ENCODE measurements at regions of chr20 and their contacts with region 1.

Region 1: DNA sequence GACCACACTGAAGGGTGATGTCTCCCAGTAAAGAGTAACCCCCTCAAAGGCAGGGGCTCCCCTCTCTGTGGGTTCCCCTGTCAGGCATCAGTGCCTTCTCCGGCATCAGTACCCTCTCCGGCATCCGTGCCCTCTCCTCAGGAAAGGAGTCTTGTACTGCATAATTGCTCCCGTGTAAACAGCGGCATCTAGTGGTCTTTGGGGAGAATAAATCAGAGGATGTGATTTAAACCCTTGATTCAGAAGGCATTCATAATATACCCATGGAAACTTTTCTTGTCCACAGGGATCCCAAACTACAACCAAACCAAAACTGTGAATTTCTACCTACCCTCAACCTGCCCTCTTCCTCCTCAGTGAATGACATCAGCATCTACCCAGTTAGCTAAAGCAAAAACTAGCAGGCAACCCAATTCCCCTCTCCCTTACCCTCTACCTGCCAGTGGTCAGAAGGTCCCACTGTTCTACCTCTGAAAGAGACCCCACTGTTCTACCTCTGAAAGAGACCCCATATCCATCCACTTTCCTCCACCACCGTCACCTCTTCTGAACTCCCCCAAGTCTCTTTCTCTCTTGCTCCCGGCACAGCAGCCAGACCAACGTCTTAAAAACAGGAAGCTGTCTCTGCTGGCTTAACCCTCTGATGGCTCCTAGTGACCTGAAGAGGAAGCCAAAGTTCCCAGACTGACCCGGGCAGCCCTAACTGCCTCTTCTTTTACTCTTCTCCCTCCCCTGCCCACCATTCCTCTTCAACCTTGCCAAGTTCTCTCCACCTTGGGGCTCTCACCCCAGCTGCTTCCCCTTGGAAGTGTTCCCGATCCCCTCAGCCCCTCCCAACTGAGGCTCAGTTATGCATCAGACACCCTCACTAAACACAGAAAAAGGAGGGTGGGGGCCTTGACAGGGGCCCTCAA is 27.2 kb downstream of the UBE2V1 start:
- DNase-seq: peak; percentile 43 to 66
- H3K4me3 ChIP-seq: peak overlapping the region; percentile 24; the same call in 1 of the 2 replicates
- H3K27ac ChIP-seq: peak overlapping the region; percentile 81
- H3K4me1 ChIP-seq: peaks cover 41% of the 10 kb centered on the region
- H3K27me3 ChIP-seq: no peaks in the 10 kb centered on the region
- CTCF ChIP-seq: peak; percentile 92

Region 2: DNA sequence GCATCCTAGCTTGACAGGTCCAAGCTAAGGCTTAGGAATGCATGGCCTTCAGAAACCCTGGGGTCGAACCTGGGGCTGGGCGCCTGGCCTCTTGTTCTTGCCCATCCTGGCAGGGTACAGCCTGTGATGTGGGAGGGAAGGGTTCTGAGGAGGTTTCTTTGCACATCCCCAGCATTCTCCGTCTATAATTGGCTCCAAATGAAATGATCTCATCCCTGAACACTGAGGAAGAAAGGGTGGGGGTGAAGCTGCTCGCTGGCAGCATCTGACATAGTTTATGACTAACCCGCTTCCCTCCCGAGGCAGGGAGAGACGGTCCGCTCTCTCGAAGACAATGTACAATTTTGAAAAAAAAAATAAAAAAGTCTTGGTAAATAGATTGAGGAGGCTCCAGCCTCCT is 740.7 kb before region 1 on chr20:
- CTCF ChIA-PET with region 1: no interaction called
- POLR2A ChIA-PET with region 1: no interaction called
- intact Hi-C with region 1: loop called (anchors 5 kb)
- DNase-seq: peak; percentile 77 to 94
- H3K4me3 ChIP-seq: peak overlapping the region; percentile 45; the same call in 1 of the 2 replicates
- H3K27ac ChIP-seq: peak overlapping the region; percentile 81
- H3K4me1 ChIP-seq: peaks cover 39% of the 10 kb centered on the region
- H3K27me3 ChIP-seq: no peaks in the 10 kb centered on the region
- CTCF ChIP-seq: no peak

Region 3: DNA sequence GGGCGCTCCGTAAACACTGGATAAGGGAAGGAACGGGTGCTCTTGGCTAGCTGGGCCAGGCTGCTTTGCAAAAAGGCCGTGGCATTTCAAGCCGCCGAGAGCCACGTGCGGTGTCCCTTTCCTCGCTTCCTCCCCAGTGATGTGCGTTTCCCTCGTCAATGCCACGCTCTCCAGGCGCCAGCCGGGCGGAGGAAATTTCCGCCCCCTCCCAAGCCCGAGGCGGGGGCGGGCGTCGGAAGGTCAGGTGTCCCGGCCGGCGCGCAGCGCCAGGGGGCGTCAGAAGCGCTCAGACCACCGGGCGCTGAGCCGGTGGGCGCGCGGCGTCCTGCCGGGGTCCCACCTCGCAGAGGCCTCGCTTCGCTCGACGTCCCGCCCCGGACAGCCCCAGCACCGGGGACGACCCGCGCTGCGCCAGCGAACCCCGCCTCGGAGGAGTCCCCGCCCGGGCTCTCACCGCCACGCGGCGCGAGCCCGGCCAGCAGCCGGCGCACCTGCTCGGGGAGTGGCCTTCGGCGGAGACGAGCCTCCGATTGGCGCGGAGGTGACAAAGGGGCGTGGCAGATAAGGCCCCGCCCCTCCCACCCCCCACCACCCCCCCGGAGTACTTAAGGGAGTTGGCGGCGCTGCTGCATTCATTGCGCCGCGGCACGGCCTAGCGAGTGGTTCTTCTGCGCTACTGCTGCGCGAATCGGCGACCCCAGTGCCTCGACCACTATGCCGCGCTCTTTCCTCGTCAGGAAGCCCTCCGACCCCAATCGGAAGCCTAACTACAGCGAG is 103.2 kb before region 1 on chr20 and contains the start of gene SNAI1:
- CTCF ChIA-PET with region 1: interaction called, 5 read pairs
- POLR2A ChIA-PET with region 1: no interaction called
- intact Hi-C with region 1: loop called (anchors 5 kb)
- DNase-seq: peak; percentile 82 to 88
- H3K4me3 ChIP-seq: peak within 1 kb of the TSS; percentile 75
- H3K27ac ChIP-seq: no peak within 1 kb of the TSS
- H3K4me1 ChIP-seq: peaks cover 10% of the 10 kb centered on the region
- H3K27me3 ChIP-seq: no peaks in the 10 kb centered on the region
- CTCF ChIP-seq: peak; percentile 68
- total RNA-seq, gene SNAI1: 2.2 and 3.6 TPM in 2 replicates

Region 4: DNA sequence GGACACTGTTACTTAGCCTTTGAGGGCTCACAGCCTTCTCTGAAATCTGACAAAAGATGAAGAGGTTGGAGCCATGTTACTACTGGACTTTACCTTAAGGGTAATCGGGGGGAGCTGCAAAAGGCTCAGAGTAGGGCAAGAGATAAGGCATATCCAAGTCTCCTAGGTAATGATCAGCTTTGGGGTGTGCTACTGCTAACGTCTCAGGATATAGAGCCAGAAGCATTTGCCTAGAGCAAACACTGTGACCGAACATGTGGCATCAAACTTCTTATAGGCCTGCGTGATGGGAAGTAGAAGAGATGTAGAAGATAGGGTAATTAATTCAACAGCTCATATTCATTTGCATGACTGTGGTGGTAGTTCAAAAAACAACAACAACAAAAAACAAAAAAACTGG is 16.2 kb after region 1 on chr20:
- CTCF ChIA-PET with region 1: interaction called, 6 read pairs
- POLR2A ChIA-PET with region 1: interaction called, 3 read pairs
- intact Hi-C with region 1: loop called (anchors 2 kb)
- DNase-seq: no peak
- H3K4me3 ChIP-seq: no peak overlapping the region
- H3K27ac ChIP-seq: no peak overlapping the region
- H3K4me1 ChIP-seq: peaks cover 35% of the 10 kb centered on the region
- H3K27me3 ChIP-seq: no peaks in the 10 kb centered on the region
- CTCF ChIP-seq: no peak

Region 5: DNA sequence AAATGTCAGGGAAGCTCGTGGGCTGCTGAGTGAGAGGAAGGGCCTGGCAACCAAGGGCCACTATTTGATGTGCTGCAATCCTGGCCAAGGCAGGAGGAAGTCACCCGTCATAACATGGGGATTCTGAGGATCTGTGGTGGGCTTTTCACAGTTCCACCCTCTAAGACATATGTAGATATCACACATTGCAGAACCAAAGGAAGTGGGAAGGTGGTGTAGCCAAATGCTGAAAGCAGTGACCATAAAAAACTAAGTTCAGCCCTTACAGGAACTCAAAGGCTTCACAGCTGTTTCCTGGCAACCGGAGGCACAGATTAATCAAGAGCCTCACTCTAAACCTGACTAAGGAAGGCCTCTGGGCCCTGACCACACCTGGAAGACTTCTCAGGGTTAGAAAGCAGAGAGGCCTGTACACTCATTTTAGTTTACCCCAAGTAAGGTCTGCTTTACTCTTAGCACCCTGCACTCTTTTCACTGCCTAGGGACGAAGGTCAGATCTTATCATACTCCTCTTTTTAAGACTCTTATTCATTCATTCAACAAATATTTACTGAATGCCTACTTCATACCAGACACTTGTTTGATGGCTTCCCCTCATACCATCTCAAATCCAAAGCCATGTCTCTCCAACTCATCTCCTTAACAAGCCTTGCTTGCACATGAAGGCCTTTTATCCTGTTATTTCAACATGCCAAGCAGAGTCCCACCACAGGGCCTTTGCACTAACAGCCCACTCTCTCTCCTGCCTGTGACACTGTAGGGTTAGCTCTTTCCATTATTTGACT is 24.6 kb after region 1 on chr20:
- CTCF ChIA-PET with region 1: interaction called, 3 read pairs
- POLR2A ChIA-PET with region 1: no interaction called
- intact Hi-C with region 1: loop called (anchors 1 kb)
- DNase-seq: peak; percentile 69 to 94
- H3K4me3 ChIP-seq: peak overlapping the region; percentile 94; the same call in 1 of the 2 replicates
- H3K27ac ChIP-seq: peak overlapping the region; percentile 64
- H3K4me1 ChIP-seq: peaks cover 39% of the 10 kb centered on the region
- H3K27me3 ChIP-seq: no peaks in the 10 kb centered on the region
- CTCF ChIP-seq: no peak

Measured in PC-9 (cell line).